B cell (primary cell): ENCODE measurements at regions of chr17 and their contacts with region 1.

Region 1: GRCh38 chr17:50397111-50397918 is at the start of gene LRRC59:
- DNase-seq: peak; percentile 95
- ATAC-seq: peak; percentile 100
- H3K4me3 ChIP-seq: peak within 1 kb of the TSS; percentile 62 to 95 (median 92)
- H3K4me3 Mint-ChIP-seq: peak within 1 kb of the TSS; percentile 89
- H3K27ac ChIP-seq: peak within 1 kb of the TSS; percentile 77 to 89
- H3K27ac Mint-ChIP-seq: peak within 1 kb of the TSS; percentile 91
- H3K4me1 ChIP-seq: peaks cover 21 to 25% of the 10 kb centered on the region in 2 donors
- H3K4me1 Mint-ChIP-seq: peaks cover 31% of the 10 kb centered on the region
- H3K27me3 ChIP-seq: no peaks in the 10 kb centered on the region
- H3K27me3 Mint-ChIP-seq: no peaks in the 10 kb centered on the region
- CTCF ChIP-seq: peak; percentile 99
- total RNA-seq, gene LRRC59: 29.5 and 31.2 TPM in 2 replicates

Region 2: GRCh38 chr17:48892940-48893645 is 1504.2 kb before region 1 on chr17:
- CTCF ChIA-PET with region 1: no interaction called
- POLR2A ChIA-PET with region 1: no interaction called
- intact Hi-C with region 1: loop called (anchors 5 kb)
- DNase-seq: no peak
- ATAC-seq: no peak
- H3K4me3 ChIP-seq: peak overlapping the region; percentile 31 to 85 (median 75)
- H3K4me3 Mint-ChIP-seq: peak overlapping the region; percentile 95
- H3K27ac ChIP-seq: peak overlapping the region; percentile 88
- H3K27ac Mint-ChIP-seq: peak overlapping the region; percentile 93
- H3K4me1 ChIP-seq: peaks cover 17 to 23% of the 10 kb centered on the region in 2 donors
- H3K4me1 Mint-ChIP-seq: peaks cover 23% of the 10 kb centered on the region
- H3K27me3 ChIP-seq: no peaks in the 10 kb centered on the region
- H3K27me3 Mint-ChIP-seq: no peaks in the 10 kb centered on the region
- CTCF ChIP-seq: no peak

Region 3: DNA sequence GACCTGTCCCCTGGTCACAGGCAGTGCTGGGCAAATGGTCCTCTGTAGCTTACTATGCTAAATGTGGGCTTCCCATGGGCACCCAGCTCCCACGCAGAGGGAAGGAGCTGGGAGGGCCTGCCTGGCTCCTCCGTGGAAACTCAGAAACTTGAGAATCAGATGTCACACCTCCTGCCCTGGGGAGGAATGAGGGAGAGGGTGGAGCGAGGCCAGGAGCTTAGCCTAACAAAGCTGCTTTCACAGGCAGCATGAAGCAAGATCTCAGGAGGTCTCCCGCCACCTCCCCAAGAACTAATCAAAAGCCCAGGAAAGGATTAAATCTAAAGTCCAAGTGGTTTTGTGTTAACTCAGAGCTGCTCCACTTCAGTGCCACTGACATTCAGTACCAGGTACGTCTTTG is 85.0 kb before region 1 on chr17:
- CTCF ChIA-PET with region 1: no interaction called
- POLR2A ChIA-PET with region 1: no interaction called
- intact Hi-C with region 1: no loop called
- DNase-seq: no peak
- ATAC-seq: no peak
- H3K4me3 ChIP-seq: no peak overlapping the region
- H3K4me3 Mint-ChIP-seq: no peak overlapping the region
- H3K27ac ChIP-seq: no peak overlapping the region
- H3K27ac Mint-ChIP-seq: no peak overlapping the region
- H3K4me1 ChIP-seq: no peaks in the 10 kb centered on the region
- H3K4me1 Mint-ChIP-seq: peaks cover 1% of the 10 kb centered on the region
- H3K27me3 ChIP-seq: peaks cover 0 to 22% (median 7%) of the 10 kb centered on the region in 4 experiments
- H3K27me3 Mint-ChIP-seq: peaks cover 27% of the 10 kb centered on the region
- CTCF ChIP-seq: no peak

Region 4: DNA sequence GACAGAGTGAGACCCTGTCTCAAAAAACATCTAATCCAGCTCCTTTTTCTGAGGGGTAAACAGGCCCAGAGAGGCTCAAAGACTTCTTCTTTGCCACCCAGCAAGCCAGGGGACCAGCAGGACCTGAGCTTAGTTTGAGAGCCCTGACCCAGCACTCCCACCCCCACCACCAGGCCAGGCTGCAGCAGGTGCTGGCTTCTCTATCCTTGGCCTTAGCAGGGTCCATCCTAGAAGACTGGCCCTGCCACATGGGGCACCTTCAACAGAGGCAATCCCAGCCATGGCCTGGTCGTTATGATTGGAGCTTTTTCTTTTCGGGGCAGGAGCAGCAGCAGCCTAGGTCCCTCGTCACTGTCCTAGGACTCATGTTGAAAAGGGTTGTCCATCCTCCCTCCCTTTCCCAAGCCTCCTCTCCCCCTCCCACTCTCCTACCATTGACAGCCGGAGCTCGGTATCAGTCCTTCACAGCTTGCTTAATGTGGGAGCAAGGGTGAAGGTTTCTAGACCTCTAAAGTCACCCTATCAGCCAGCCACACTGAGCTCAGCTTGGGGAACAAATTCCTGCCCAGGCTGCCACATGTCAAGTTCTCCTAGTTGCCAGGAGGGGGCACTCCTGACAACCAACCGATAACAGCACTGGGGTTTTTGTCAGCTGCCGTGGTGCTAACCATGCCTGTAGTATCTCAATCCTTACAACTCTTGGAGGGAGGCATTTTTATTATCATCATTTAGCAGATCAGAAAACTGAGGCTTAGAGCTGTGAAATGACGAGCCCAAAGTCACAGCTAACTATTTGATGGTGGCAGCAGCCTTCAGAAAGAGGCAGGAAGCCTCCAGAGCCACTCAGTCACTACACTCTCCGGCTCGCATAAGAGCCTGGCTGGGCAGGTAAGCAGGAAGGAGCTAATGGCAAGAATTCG is 35.5 kb before region 1 on chr17:
- CTCF ChIA-PET with region 1: interaction called, 43 read pairs
- POLR2A ChIA-PET with region 1: interaction called, 4 read pairs
- intact Hi-C with region 1: no loop called
- DNase-seq: peak; percentile 76
- ATAC-seq: peak; percentile 93
- H3K4me3 ChIP-seq: no peak overlapping the region
- H3K4me3 Mint-ChIP-seq: no peak overlapping the region
- H3K27ac ChIP-seq: no peak overlapping the region
- H3K27ac Mint-ChIP-seq: peak overlapping the region; percentile 51
- H3K4me1 ChIP-seq: peaks cover 5 to 8% of the 10 kb centered on the region in 2 donors
- H3K4me1 Mint-ChIP-seq: peaks cover 8% of the 10 kb centered on the region
- H3K27me3 ChIP-seq: no peaks in the 10 kb centered on the region
- H3K27me3 Mint-ChIP-seq: no peaks in the 10 kb centered on the region
- CTCF ChIP-seq: peak; percentile 81

Region 5: GRCh38 chr17:50425682-50426471 is 28.6 kb after region 1 on chr17 and contains the start of gene ACSF2:
- CTCF ChIA-PET with region 1: interaction called, 28 read pairs
- POLR2A ChIA-PET with region 1: interaction called, 21 read pairs
- intact Hi-C with region 1: loop called (anchors 1 kb)
- DNase-seq: peak; percentile 79
- ATAC-seq: peak; percentile 81
- H3K4me3 ChIP-seq: peak within 1 kb of the TSS; percentile 32 to 82 (median 70)
- H3K4me3 Mint-ChIP-seq: peak within 1 kb of the TSS; percentile 94
- H3K27ac ChIP-seq: peak within 1 kb of the TSS; percentile 41 to 46
- H3K27ac Mint-ChIP-seq: peak within 1 kb of the TSS; percentile 93
- H3K4me1 ChIP-seq: peaks cover 27 to 41% of the 10 kb centered on the region in 2 donors
- H3K4me1 Mint-ChIP-seq: peaks cover 51% of the 10 kb centered on the region
- H3K27me3 ChIP-seq: no peaks in the 10 kb centered on the region
- H3K27me3 Mint-ChIP-seq: no peaks in the 10 kb centered on the region
- CTCF ChIP-seq: no peak
- total RNA-seq, gene ACSF2: 66.1 and 82.6 TPM in 2 replicates

Region 6: DNA sequence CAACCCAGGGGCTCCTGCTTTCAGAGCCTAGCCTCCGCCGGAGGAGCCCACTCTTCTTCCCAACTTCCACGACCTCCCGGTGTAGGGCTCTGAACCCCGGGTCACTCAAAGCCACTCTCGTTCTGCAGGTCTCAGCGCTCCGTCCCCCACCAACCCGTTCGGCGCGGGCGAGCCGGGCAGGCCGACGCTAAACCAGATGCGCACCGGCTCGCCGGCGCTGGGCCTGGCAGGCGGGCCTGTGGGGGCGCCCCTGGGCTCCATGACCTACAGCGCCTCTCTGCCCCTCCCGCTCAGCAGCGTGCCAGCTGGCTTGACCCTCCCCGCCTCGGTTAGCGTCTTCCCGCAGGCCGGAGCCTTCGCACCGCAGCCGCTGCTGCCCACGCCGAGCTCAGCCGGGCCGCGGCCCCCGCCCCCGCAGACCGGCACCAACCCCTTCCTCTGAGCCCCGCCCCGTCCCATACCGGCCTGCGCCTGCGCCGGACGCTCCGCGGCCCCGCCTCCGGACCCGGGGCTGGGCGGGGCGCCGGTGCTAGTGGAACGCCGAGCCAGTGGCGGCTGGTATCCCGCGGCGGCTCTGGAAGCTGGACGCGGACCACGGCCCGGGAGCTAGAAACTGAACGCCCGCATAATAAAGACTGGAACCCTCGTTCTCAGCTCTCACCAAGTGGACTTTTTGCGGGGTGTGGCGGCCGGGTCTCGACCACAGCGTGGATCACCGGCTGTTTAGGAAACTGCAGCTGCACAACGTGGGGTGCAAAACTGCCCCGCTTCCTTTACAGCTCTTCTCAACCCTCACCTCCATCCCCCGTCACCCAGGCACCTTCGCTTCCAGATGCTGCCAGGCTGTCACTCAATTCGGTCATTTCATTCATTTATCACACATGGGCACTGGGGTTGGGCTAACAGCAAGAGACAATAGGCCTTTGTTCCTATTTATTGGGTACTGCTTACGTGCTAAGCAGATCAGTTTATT is 144.7 kb after region 1 on chr17:
- CTCF ChIA-PET with region 1: interaction called, 4 read pairs
- POLR2A ChIA-PET with region 1: no interaction called
- intact Hi-C with region 1: loop called (anchors 1 kb)
- DNase-seq: peak; percentile 91
- ATAC-seq: peak; percentile 85
- H3K4me3 ChIP-seq: peak overlapping the region; percentile 21 to 73 (median 52)
- H3K4me3 Mint-ChIP-seq: peak overlapping the region; percentile 95
- H3K27ac ChIP-seq: peak overlapping the region in 1 of 2 donors; percentile 41
- H3K27ac Mint-ChIP-seq: peak overlapping the region; percentile 79
- H3K4me1 ChIP-seq: peaks cover 16 to 22% of the 10 kb centered on the region in 2 donors
- H3K4me1 Mint-ChIP-seq: peaks cover 17% of the 10 kb centered on the region
- H3K27me3 ChIP-seq: peaks cover 0 to 15% (median 5%) of the 10 kb centered on the region in 4 experiments
- H3K27me3 Mint-ChIP-seq: peaks cover 7% of the 10 kb centered on the region
- CTCF ChIP-seq: peak; percentile 57